Cardiac septum (tissue), 1 donor: ENCODE measurements at regions of chr19 and their contacts with region 1.

Region 1: DNA sequence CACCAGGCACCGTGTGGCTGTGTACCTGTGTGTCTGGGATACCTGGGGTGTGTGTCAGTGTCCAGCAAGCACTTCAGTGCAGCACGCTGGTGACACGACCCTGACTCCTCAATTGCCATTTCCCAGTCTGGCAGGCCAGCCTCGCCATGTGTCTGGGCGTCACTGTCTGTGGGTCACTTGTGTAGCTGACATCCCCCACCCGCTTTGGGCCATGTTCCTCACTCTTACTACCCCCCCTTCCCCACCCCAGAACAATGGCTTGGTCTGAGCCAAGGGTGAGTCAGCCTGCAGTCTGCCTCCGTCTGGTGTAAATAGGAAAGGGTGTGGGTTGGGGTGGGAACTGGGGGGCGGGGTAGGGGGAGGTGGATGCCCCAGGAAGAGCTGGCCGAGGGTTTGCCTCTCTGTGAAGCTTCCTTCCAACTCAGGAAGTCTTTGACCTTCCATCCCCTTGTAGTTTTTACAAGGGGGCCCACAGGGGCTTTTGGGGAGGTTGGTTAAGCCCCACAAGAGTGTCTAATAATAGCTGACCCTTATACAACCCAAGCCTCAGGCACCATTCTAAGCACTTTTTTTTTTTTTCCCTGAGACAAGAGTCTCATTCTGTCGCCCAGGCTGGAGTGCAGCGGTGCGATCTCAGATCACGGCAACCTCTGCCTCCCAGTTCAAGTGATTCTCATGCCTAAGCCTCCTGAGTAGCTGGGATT is 17.6 kb downstream of the NOVA2 start:
- DNase-seq: peak; percentile 82

Region 2: DNA sequence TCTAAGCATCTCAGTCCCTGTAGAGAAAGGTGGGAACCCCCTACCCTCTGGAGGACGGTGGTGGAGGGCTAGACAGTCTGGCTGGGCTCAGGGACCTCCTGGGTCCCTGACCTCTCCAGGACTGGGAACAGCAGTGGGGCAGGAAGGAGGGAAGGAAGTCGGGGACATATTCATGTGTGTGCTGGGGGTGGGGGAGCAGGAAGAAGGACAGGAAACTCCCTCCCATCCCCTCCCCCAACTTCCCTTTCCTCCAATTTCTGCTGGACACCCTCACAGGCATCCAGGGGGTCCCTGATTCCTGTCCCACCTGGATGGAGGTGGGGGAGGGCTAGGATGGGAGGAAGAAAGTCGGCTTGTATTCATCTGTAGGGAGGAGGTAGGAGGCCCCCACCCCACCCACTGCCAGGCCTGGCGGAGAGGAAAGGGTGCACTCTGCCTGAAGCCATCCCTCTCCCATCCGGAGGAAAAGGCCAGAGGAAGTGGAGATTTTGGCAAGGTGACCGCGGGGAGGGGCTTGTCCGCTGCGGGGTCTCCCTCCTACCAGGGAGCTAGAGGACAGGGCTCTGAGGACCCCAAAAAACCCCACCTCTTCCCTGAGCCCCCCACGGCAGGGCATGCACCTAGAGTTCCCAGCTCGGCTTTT is 15.3 kb after region 1 on chr19:
- intact Hi-C with region 1: loop called (anchors 2 kb)
- DNase-seq: no peak